HEK293T (cell line): ENCODE measurements at regions of chr11 and their contacts with region 1.

Region 1: DNA sequence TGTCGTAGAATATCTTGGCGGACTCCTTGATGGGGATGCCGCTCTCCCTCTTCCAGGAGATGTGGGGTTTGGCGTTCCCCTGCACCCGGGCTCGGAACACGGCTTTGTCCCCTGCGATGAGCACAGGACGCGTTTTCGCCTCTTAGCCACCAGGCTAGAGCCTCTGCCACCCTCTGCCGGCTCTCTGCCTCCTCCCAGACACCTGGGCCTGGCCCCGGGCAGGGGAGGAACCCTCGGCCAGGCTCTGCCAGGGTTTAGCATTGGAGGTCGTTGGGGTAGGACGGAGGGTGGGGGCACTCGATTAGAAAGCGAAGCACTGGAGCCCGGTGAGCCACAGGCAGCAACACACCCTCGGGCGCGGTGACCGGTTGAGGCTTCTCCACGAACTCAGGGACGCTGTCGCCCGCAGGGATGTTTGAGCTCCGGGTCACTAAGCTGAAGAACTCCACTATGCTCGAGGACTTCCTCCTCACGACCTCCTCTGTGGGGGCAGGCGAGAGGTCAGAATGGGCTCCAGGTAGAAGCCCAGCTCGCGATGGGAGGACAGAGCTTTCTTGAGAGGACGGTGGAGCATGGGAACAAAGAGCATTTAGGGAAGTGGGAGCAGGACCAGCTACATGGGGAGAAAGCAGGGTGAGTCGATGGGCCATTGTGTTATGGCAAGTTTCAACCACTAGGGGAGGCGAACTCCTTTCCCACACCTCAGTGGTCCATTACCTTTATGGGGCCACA is 4.3 kb downstream of the IGSF22 start:
- DNase-seq: peak; percentile 71

Region 2: DNA sequence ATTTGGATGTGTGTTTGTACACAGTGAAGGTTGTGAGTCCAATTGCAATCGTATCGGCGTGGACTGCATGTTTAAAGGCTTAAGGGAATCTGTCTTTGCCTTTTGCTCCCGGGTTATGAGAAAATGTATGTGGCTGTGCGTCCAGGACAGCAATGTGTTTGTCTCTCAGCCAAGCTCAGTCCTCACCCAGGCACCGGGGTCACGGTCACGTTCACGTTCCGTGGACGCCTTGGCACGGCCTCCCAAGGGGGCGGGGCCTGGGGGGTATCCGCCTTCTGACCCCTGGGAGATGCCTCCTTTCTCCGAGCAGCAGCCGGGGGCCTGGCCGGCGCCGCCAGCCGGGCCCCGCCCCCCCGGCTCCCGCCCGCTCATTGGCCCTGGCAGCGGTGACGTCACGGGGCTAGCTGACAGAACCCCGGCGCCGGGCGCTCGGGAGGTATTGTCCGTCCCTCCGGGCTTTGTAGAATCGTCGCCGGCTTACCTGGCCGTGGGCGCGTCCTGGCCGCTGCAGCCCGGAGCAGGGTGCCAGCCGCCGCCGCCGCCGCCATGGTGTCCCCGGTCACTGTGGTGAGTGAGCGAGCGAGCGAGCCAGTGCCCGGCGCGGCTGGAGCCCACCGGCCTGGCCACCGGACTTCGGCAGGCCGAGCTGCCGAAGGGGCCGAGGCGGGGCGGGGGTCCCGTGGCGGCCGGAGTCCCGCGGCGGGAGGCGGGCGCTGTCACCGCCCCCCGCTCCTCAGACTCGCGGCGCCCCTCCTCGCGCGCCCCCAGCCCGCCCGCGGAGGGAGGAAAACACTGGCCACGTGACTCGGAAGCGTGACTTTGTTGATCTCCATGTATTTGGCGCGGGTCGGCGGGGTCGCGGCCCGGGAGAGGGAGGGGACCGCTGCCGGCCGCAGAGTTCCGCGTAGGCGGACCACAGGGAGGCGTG is 23.1 kb before region 1 on chr11 and contains the start of gene TMEM86A:
- CTCF ChIA-PET with region 1: interaction called, 5 read pairs
- POLR2A ChIA-PET with region 1: interaction called, 14 read pairs
- DNase-seq: peak; percentile 96